Cardiac septum (tissue), 1 donor: ENCODE measurements at regions of chr1 and their contacts with region 1.

Region 1: GRCh38 chr1:214637722-214638458 is 34.9 kb downstream of the CENPF start:
- DNase-seq: no peak

Region 2: GRCh38 chr1:214416417-214416816 is 221.5 kb before region 1 on chr1:
- intact Hi-C with region 1: no loop called
- DNase-seq: no peak

Region 3: DNA sequence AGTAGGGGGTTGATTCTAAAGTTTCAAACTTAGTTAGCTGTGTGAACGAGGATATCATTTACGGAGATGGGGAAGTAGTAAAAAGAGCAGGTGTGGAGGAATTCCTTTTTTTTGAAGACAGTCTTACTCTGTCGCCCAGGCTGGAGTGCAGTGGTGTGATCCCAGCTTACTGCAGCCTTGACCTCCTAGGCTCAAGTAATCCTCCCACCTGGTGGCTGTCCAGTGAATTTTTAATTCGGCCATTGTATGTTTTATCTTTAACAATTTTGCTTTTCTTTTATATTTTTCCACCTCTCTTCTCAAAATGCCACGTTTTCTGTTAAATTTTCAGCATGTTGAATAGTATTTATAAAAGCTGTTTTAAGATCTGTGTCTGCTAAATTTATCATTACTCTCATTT is 47.2 kb before region 1 on chr1:
- intact Hi-C with region 1: no loop called
- DNase-seq: no peak

Region 4: GRCh38 chr1:214816603-214817002 is 178.7 kb after region 1 on chr1:
- intact Hi-C with region 1: no loop called
- DNase-seq: no peak

Region 5: GRCh38 chr1:214952648-214953047 is 314.8 kb after region 1 on chr1:
- intact Hi-C with region 1: no loop called
- DNase-seq: no peak

Region 6: DNA sequence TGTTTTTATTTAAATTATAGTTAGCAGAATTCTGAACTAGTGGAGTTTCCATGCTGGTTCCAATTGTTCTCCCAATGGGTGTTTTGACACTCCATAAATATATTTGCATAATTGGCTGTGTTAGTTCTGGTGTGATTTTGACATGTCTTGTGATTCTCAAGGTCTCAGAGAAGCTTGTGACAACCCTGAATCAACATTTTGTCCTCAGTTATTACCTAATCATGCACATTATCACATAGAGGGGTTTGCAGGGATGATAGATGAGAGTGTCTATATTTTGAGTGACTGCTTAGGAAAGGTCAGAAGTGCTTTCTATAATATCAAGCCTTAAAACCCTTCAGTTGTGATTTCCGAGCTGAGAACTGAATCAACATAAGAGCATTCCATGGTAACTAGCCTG is 433.2 kb after region 1 on chr1:
- intact Hi-C with region 1: loop called (anchors 5 kb)
- DNase-seq: no peak

Region 7: GRCh38 chr1:215526553-215527151 is 888.8 kb after region 1 on chr1:
- intact Hi-C with region 1: loop called (anchors 10 kb)
- DNase-seq: no peak